Prostate gland (tissue), 2 donors: ENCODE measurements at regions of chr6 and their contacts with region 1.

Region 1: DNA sequence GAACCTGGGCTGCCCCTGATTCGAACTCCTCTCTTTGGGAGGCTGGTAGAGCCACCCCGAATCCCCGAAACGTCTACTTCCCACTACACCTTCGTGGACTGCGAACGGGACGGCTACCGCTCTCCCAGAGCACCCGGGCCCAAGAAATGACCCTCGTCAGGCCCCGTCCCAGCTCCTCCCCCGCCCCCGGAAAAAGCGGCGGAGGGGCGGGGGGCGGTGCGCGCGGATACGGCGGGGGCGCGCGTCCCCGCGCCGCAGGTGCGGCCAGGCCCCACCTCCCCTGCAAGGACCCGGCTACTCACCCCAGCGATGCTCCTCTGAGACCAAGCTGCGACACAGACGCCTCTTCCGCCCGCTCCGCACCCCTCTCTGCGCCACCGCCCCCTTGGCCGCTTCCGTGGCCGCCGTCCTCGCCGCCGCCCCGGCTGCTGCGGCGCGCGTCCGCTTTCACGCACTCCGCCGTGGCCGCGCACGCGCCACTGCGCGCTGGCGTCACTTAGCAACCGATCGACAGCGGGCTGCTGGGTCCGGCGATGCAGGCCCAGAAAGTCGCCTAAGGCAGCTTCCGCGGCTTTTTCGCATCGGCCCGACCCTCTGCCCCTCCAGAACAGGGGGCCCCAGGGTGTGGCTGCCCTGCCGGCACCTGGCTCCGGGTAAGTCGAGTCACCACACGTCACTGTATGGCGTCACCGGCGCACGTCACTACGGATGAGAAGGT is at the start of gene BTBD9:
- DNase-seq: peak; percentile 71
- H3K4me3 ChIP-seq: peak within 1 kb of the TSS; percentile 78 to 83
- H3K27ac ChIP-seq: peak within 1 kb of the TSS; percentile 89 to 91
- H3K4me1 ChIP-seq: peaks cover 7% of the 10 kb centered on the region
- H3K27me3 ChIP-seq: no peaks in the 10 kb centered on the region
- CTCF ChIP-seq: no peak
- POLR2A ChIP-seq: no peak
- total RNA-seq, gene BTBD9: 11.2 to 17.4 TPM

Region 2: GRCh38 chr6:38702558-38703397 is 63.1 kb after region 1 on chr6 and contains the start of gene GLO1:
- intact Hi-C with region 1: loop called (anchors 10 kb)
- DNase-seq: peak; percentile 99
- H3K4me3 ChIP-seq: peak within 1 kb of the TSS; percentile 73 to 82
- H3K27ac ChIP-seq: peak within 1 kb of the TSS; percentile 87 to 89
- H3K4me1 ChIP-seq: no peaks in the 10 kb centered on the region
- H3K27me3 ChIP-seq: no peaks in the 10 kb centered on the region
- CTCF ChIP-seq: no peak
- POLR2A ChIP-seq: peak; percentile 90
- total RNA-seq, gene GLO1: 93.7 to 176 TPM

Region 3: GRCh38 chr6:38824243-38824894 is 184.7 kb after region 1 on chr6:
- intact Hi-C with region 1: no loop called
- DNase-seq: no peak
- H3K4me3 ChIP-seq: no peak overlapping the region
- H3K27ac ChIP-seq: no peak overlapping the region
- H3K4me1 ChIP-seq: no peaks in the 10 kb centered on the region
- H3K27me3 ChIP-seq: no peaks in the 10 kb centered on the region
- CTCF ChIP-seq: no peak
- POLR2A ChIP-seq: no peak